Calu3 (cell line): ENCODE measurements at regions of chr1 and their contacts with region 1.

Region 1: DNA sequence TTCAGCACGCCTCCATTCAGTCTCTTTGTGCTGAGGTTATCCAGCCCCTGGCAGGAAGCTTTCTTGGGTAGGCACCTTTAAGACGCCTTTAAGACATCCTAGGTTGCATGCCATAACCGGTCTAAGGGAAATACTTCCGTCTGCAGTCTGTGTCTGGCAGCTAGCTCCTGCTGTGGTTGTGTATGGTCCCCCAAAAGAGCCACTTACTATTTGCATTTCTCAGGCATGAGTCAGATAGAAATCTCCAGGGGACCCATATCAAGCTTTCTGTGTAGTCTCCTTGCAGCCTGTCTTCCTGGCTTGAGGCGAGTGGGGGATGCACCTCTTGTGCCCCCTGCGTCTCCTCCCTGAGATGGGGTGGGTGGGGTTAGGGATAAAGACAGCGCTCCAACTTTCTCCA is 10.0 kb upstream of the RYR2 start:
- DNase-seq: peak; percentile 4
- H3K4me3 Mint-ChIP-seq: no peak overlapping the region
- H3K27ac Mint-ChIP-seq: no peak overlapping the region
- H3K4me1 Mint-ChIP-seq: no peaks in the 10 kb centered on the region
- H3K27me3 Mint-ChIP-seq: no peaks in the 10 kb centered on the region
- CTCF ChIP-seq: no peak

Region 2: GRCh38 chr1:237012788-237013383 is 19.1 kb before region 1 on chr1:
- CTCF ChIA-PET with region 1: no interaction called
- intact Hi-C with region 1: loop called (anchors 1 kb)
- DNase-seq: peak; percentile 74
- H3K4me3 Mint-ChIP-seq: peak overlapping the region; percentile 49
- H3K27ac Mint-ChIP-seq: peak overlapping the region; percentile 19
- H3K4me1 Mint-ChIP-seq: peaks cover 12% of the 10 kb centered on the region
- H3K27me3 Mint-ChIP-seq: no peaks in the 10 kb centered on the region
- CTCF ChIP-seq: no peak